T-cell (primary cell): ENCODE measurements at regions of chr19 and their contacts with region 1.

Region 1: GRCh38 chr19:11924886-11925650 is at the start of gene ZNF700:
- DNase-seq: peak; percentile 76 to 95 (median 90)
- ATAC-seq: peak; percentile 89 to 94 (median 91)
- H3K4me3 ChIP-seq: peak within 1 kb of the TSS; percentile 83 to 98
- H3K4me3 Mint-ChIP-seq: peak within 1 kb of the TSS; percentile 98
- H3K27ac ChIP-seq: peak within 1 kb of the TSS; percentile 94
- H3K27ac Mint-ChIP-seq: peak within 1 kb of the TSS; percentile 95 to 99
- H3K4me1 ChIP-seq: peaks cover 11 to 34% of the 10 kb centered on the region in 2 experiments
- H3K4me1 Mint-ChIP-seq: peaks cover 47 to 49% (median 48%) of the 10 kb centered on the region in 3 donors
- H3K27me3 ChIP-seq: no peaks in the 10 kb centered on the region
- H3K27me3 Mint-ChIP-seq: no peaks in the 10 kb centered on the region
- total RNA-seq, gene ZNF700: 17.2 to 19.7 (median 18.4) TPM

Region 2: GRCh38 chr19:11964858-11965645 is 40.0 kb after region 1 on chr19 and contains the start of gene ZNF763:
- CTCF ChIA-PET with region 1: interaction called, 4 to 32 read pairs
- POLR2A ChIA-PET with region 1: no interaction called
- DNase-seq: peak; percentile 75 to 93 (median 85)
- ATAC-seq: peak; percentile 92 to 95 (median 94)
- H3K4me3 ChIP-seq: peak within 1 kb of the TSS; percentile 76 to 98
- H3K4me3 Mint-ChIP-seq: peak within 1 kb of the TSS; percentile 90 to 95 (median 93)
- H3K27ac ChIP-seq: peak within 1 kb of the TSS; percentile 90
- H3K27ac Mint-ChIP-seq: peak within 1 kb of the TSS; percentile 91 to 97
- H3K4me1 ChIP-seq: peaks cover 5 to 20% of the 10 kb centered on the region in 2 experiments
- H3K4me1 Mint-ChIP-seq: peaks cover 27 to 30% (median 28%) of the 10 kb centered on the region in 3 donors
- H3K27me3 ChIP-seq: no peaks in the 10 kb centered on the region
- H3K27me3 Mint-ChIP-seq: no peaks in the 10 kb centered on the region
- total RNA-seq, gene ZNF763: 0.98 to 10.5 (median 8.0) TPM

Region 3: DNA sequence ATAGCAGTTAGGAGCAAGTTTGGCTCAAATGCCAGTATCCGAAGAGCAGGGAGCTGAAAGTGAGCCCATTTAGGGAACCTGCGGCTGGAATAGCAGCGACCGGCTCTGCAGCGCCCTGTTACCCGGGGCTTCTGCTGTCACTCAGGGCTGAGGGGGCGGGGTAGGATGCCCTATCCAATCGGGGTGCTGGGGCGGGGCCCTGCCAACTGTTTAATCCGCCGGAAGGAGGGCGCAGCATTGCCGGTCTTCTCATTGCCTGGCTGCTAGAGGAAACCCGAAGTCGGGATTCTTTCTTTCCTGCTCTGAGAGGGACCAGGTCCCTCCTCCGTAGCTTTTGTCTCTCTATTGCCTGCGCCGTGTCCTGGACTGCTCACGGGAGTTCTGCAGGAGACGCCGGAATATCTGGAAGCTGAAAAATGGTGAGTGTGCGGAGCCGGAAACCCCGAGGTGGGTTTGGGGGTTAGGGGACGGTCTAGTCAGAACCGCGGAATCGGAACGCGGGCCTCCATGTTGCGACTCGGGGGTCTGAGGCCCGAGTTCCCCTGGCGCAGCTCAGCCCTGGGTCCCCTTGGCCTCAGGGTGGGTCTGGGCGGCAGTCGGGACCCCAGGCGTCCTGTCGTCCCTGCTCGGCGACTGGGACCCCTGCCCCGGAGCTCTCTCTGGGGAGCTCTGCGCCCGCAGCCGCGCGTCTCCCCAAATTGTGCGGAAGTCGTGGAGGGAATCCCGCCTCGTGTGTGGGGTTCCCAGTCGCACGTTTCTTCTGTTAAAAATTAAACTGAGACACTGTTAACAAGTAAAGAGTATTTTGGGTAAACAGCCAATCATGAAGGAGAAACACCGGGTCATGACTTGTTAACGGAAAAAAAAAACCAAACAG is 62.6 kb after region 1 on chr19:
- CTCF ChIA-PET with region 1: interaction called, 8 to 70 read pairs
- POLR2A ChIA-PET with region 1: no interaction called
- DNase-seq: peak; percentile 78 to 95 (median 90)
- ATAC-seq: peak; percentile 89 to 94 (median 94)
- H3K4me3 ChIP-seq: peak overlapping the region; percentile 91 to 96
- H3K4me3 Mint-ChIP-seq: peak overlapping the region; percentile 93 to 99 (median 97)
- H3K27ac ChIP-seq: peak overlapping the region; percentile 84
- H3K27ac Mint-ChIP-seq: peak overlapping the region; percentile 94 to 97
- H3K4me1 ChIP-seq: peaks cover 6 to 21% of the 10 kb centered on the region in 2 experiments
- H3K4me1 Mint-ChIP-seq: peaks cover 27 to 38% (median 34%) of the 10 kb centered on the region in 3 donors
- H3K27me3 ChIP-seq: no peaks in the 10 kb centered on the region
- H3K27me3 Mint-ChIP-seq: no peaks in the 10 kb centered on the region

Region 4: DNA sequence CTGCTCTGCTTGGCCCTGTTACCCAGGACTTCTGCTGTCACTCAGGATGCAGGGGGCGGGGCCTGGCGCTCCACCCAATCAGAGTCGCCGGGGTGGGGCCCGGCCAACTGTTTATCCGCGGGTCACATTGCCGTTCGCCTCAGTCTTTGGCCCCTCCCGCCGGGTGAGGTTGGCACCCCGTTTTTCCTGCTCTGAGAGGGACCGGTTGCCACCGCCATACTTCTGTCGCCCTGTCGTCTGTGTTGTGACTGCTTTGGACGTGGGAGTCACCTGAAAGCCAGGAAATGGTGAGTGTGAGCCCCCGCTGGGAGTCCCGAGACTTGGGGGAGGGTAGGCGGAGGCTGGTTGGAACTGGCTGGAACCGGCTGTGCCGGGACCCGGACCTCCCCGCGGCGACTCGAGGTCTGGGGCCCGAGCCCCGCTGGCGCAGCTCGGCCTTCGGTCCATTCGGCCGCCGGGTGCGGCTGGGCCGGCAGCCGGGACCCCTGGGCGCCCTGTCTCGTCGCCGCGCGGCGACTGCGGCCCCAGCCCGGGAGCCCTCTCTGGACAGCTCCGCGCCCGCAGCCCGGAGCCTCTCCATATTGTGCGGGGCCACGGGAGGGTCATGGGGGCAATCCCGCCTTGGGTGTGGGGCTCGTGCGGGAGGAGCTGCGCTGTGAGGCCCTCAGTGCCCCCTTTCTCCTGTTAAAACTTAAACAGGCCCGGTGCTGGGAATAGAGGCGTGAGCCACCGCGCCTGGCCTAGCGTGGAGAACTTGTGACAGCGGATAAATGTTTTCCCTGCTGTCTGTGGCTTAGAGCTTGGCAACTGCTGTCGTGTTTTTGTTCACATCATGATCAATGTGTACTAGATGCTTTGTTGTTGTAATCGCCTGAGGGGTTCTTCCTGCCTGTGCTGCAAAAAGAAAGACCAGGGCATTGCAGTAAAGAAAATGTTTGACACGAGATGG is 139.8 kb after region 1 on chr19 and contains the start of gene ZNF844:
- CTCF ChIA-PET with region 1: interaction called in 1 of 2 experiments, 11 read pairs
- POLR2A ChIA-PET with region 1: no interaction called
- DNase-seq: peak; percentile 27 to 78 (median 60)
- ATAC-seq: peak; percentile 79 to 91 (median 88)
- H3K4me3 ChIP-seq: peak within 1 kb of the TSS; percentile 84 to 94
- H3K4me3 Mint-ChIP-seq: peak within 1 kb of the TSS; percentile 80 to 89 (median 83)
- H3K27ac ChIP-seq: peak within 1 kb of the TSS; percentile 81
- H3K27ac Mint-ChIP-seq: peak within 1 kb of the TSS; percentile 60 to 78
- H3K4me1 ChIP-seq: peaks cover 0 to 18% of the 10 kb centered on the region in 2 experiments
- H3K4me1 Mint-ChIP-seq: peaks cover 0 to 13% (median 11%) of the 10 kb centered on the region in 3 donors
- H3K27me3 ChIP-seq: no peaks in the 10 kb centered on the region
- H3K27me3 Mint-ChIP-seq: no peaks in the 10 kb centered on the region
- total RNA-seq, gene ZNF844: 9.2 to 20.7 (median 11.5) TPM

Region 5: GRCh38 chr19:12139885-12140547 is 214.9 kb after region 1 on chr19 and contains the start of gene ZNF20:
- CTCF ChIA-PET with region 1: interaction called, 4 to 19 read pairs
- POLR2A ChIA-PET with region 1: interaction called in 1 of 2 experiments, 14 read pairs
- DNase-seq: peak; percentile 62 to 89 (median 79)
- ATAC-seq: peak; percentile 90 to 96 (median 94)
- H3K4me3 ChIP-seq: peak within 1 kb of the TSS; percentile 70 to 95
- H3K4me3 Mint-ChIP-seq: peak within 1 kb of the TSS; percentile 91 to 93 (median 91)
- H3K27ac ChIP-seq: peak within 1 kb of the TSS; percentile 54
- H3K27ac Mint-ChIP-seq: peak within 1 kb of the TSS; percentile 41 to 63
- H3K4me1 ChIP-seq: peaks cover 10 to 23% of the 10 kb centered on the region in 2 experiments
- H3K4me1 Mint-ChIP-seq: peaks cover 36 to 37% (median 36%) of the 10 kb centered on the region in 3 donors
- H3K27me3 ChIP-seq: no peaks in the 10 kb centered on the region
- H3K27me3 Mint-ChIP-seq: no peaks in the 10 kb centered on the region
- total RNA-seq, gene ZNF20: 2.2 to 8.8 (median 6.0) TPM in 4 of 5 donors, not detected in the other

Region 6: DNA sequence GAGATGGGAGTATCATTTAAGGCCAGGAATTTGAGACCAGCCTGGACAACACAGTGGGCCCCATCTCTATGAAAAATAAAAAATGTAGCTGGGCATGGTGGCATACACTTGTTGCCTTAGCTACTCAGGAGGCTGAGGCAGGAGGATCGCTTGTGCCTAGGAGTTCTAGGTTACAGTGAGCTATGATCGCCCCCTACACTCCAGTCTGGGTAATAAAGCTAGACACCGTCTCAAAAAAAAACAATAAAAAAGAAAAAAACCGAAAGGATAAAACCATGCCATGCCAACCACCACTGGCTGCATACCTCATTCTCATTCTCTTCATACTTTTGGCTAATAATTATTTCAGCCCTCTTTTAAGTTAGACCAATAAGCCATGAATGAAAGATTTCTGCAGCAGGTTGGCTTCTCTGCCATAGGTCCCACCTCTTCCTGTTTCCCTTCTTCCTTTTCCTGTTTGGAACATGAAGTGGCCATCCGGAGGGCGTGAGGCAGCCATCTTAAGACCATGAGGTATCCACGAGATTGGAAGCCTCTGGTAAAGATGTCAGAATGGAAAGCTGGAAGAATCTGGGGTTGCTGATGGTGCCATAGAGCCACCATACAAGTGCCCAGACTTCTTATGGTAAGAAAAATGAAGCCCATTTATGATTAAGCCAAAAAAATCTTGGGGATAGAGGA is 1409.9 kb after region 1 on chr19:
- CTCF ChIA-PET with region 1: no interaction called
- POLR2A ChIA-PET with region 1: no interaction called
- DNase-seq: no peak
- ATAC-seq: no peak
- H3K4me3 ChIP-seq: no peak overlapping the region
- H3K4me3 Mint-ChIP-seq: no peak overlapping the region
- H3K27ac ChIP-seq: no peak overlapping the region
- H3K27ac Mint-ChIP-seq: no peak overlapping the region
- H3K4me1 ChIP-seq: no peaks in the 10 kb centered on the region
- H3K4me1 Mint-ChIP-seq: no peaks in the 10 kb centered on the region
- H3K27me3 ChIP-seq: peaks cover 0 to 15% of the 10 kb centered on the region in 2 experiments
- H3K27me3 Mint-ChIP-seq: peaks cover 35 to 46% of the 10 kb centered on the region in 2 donors